T-cell (primary cell): ENCODE measurements at regions of chr2 and their contacts with region 1.

Region 1: DNA sequence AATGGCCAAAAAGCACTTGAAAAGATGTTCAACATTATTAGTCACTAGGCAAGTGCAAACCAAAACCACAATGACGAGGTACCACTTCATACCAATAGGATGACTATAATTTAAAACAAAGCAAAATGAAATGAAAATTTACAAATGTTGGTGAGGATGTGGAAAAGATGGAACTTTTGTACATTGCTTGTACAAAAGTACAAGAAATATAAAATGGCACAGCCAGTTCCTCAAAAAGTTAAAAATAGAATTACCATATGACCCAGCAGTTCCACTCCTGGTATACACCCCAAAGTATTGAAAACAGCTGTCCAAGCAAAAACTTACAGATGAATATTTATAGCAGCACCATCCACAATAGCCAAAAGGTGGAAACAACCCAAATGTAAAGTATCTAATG is 107.8 kb upstream of the XPO1 start:
- DNase-seq: no peak
- ATAC-seq: no peak
- H3K4me3 ChIP-seq: no peak overlapping the region
- H3K4me3 Mint-ChIP-seq: no peak overlapping the region
- H3K27ac ChIP-seq: no peak overlapping the region
- H3K27ac Mint-ChIP-seq: no peak overlapping the region
- H3K4me1 ChIP-seq: no peaks in the 10 kb centered on the region
- H3K4me1 Mint-ChIP-seq: no peaks in the 10 kb centered on the region
- H3K27me3 ChIP-seq: no peaks in the 10 kb centered on the region
- H3K27me3 Mint-ChIP-seq: peaks cover 0 to 2% of the 10 kb centered on the region in 2 donors

Region 2: GRCh38 chr2:61620244-61621159 is 25.4 kb before region 1 on chr2:
- CTCF ChIA-PET with region 1: interaction called in 1 of 2 experiments, 13 read pairs
- POLR2A ChIA-PET with region 1: no interaction called
- DNase-seq: no peak
- ATAC-seq: no peak
- H3K4me3 ChIP-seq: no peak overlapping the region
- H3K4me3 Mint-ChIP-seq: no peak overlapping the region
- H3K27ac ChIP-seq: no peak overlapping the region
- H3K27ac Mint-ChIP-seq: no peak overlapping the region
- H3K4me1 ChIP-seq: no peaks in the 10 kb centered on the region
- H3K4me1 Mint-ChIP-seq: no peaks in the 10 kb centered on the region
- H3K27me3 ChIP-seq: no peaks in the 10 kb centered on the region
- H3K27me3 Mint-ChIP-seq: no peaks in the 10 kb centered on the region